ENCODE measurements at regions of chr2 and their contacts with region 1.

Region 1: GRCh38 chr2:211157856-211158463 is 601.6 kb downstream of the CPS1 start:
- DNase-seq: peak; percentile 58
- H3K4me3 ChIP-seq: no peak overlapping the region
- H3K27ac ChIP-seq: no peak overlapping the region
- H3K4me1 ChIP-seq: no peaks in the 10 kb centered on the region
- H3K27me3 ChIP-seq: no peaks in the 10 kb centered on the region
- CTCF ChIP-seq: peak; percentile 61 to 82 (median 68)
- POLR2A ChIP-seq: no peak

Region 2: DNA sequence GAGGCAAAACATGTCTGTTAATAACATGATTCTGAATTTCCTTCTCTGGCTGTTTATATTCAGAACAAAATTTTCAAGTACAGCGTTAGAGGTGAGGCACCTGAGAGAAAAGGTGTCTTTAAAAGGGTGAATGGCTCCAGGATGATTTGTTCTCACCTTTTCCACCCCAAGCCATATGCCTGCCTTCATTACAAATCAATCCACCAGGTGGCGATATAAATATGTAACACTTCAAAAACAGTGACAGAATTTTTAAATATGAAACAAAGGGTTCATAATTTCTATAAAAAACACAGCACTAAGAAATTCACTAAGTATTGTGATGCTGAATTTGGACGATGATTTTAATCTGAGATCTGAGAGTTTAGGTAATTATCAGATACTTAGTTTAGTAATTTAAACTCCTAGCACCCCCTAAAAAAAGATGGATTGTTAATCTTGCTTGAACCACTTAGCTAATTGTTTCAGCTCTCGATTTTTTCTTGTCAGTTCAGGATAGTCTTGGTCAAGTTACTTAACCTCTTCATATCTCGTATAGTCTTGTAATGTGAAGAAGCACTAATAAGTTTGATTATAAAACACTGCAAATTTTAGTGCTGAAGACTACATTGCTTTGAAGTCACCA is 72.8 kb before region 1 on chr2:
- intact Hi-C with region 1: loop called (anchors 5 kb)
- DNase-seq: no peak
- H3K4me3 ChIP-seq: no peak overlapping the region
- H3K27ac ChIP-seq: no peak overlapping the region
- H3K4me1 ChIP-seq: no peaks in the 10 kb centered on the region
- H3K27me3 ChIP-seq: no peaks in the 10 kb centered on the region
- CTCF ChIP-seq: peak in 3 of 4 experiments; percentile 45 to 54 (median 49)
- POLR2A ChIP-seq: no peak

Measured in prostate gland (tissue), 2 donors.